ENCODE measurements at regions of chr1 and their contacts with region 1.

Region 1: DNA sequence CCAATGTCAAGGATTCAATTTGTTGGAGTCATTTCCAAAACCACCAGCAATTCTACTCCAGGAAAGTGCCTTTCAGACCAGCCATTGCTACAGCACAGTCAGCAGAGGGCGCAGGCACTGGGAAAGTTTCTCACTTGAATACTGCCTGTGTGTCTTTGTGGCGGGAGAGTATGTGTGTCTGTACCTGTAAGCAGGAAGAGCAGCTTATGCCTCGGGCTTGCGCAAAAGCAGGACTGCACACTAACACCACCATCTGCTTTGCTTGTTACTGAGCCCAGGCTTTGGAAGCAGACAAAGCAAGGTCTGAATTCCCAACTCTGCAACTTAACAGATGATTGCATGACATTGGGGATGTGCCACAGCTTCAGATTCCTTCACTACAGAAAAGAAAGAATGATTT is 7.0 kb upstream of the CTSE start:
- DNase-seq: peak in 1 of 2 experiments; percentile 70
- H3K4me3 ChIP-seq: no peak overlapping the region
- H3K27ac ChIP-seq: no peak overlapping the region
- H3K4me1 ChIP-seq: peaks cover 0 to 3% (median 0%) of the 10 kb centered on the region in 4 experiments; a peak in 2 of 7 replicates
- H3K27me3 ChIP-seq: no peaks in the 10 kb centered on the region
- CTCF ChIP-seq: peak; percentile 76 to 99 (median 94)
- EP300 ChIP-seq: no peak
- POLR2A ChIP-seq: no peak
- RAD21 ChIP-seq: peak; percentile 75 to 84

Region 2: GRCh38 chr1:205878026-205878425 is 152.7 kb before region 1 on chr1:
- CTCF ChIA-PET with region 1: no interaction called
- POLR2A ChIA-PET with region 1: no interaction called
- DNase-seq: no peak
- H3K4me3 ChIP-seq: no peak overlapping the region
- H3K27ac ChIP-seq: no peak overlapping the region
- H3K4me1 ChIP-seq: no peaks in the 10 kb centered on the region
- H3K27me3 ChIP-seq: no peaks in the 10 kb centered on the region
- CTCF ChIP-seq: no peak
- EP300 ChIP-seq: no peak
- POLR2A ChIP-seq: no peak
- RAD21 ChIP-seq: no peak

Region 3: DNA sequence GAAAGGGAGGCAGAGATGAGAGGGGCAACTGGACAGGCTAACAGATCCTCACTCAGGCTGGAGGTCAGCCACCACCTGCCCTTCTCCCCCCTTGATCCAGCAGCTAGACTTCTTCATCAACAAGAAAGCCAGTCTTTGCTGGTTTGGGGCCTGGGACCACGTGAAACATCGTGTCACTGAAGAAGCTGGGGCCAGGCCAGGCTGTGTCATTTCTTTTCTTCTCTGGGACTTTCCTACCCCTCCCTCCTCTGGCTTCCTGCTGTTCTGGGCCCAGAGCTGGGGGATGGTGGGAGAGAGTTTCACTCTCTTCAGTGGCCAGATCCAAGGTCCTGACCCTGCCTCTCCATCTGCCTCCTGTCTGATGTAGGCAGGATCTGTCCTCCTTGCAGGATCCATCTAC is 69.3 kb before region 1 on chr1:
- CTCF ChIA-PET with region 1: no interaction called
- POLR2A ChIA-PET with region 1: no interaction called
- DNase-seq: no peak
- H3K4me3 ChIP-seq: no peak overlapping the region
- H3K27ac ChIP-seq: no peak overlapping the region
- H3K4me1 ChIP-seq: peaks cover 0 to 9% (median 4%) of the 10 kb centered on the region in 4 experiments; a peak in 4 of 7 replicates
- H3K27me3 ChIP-seq: no peaks in the 10 kb centered on the region
- CTCF ChIP-seq: no peak
- EP300 ChIP-seq: no peak
- POLR2A ChIP-seq: no peak
- RAD21 ChIP-seq: no peak

Region 4: DNA sequence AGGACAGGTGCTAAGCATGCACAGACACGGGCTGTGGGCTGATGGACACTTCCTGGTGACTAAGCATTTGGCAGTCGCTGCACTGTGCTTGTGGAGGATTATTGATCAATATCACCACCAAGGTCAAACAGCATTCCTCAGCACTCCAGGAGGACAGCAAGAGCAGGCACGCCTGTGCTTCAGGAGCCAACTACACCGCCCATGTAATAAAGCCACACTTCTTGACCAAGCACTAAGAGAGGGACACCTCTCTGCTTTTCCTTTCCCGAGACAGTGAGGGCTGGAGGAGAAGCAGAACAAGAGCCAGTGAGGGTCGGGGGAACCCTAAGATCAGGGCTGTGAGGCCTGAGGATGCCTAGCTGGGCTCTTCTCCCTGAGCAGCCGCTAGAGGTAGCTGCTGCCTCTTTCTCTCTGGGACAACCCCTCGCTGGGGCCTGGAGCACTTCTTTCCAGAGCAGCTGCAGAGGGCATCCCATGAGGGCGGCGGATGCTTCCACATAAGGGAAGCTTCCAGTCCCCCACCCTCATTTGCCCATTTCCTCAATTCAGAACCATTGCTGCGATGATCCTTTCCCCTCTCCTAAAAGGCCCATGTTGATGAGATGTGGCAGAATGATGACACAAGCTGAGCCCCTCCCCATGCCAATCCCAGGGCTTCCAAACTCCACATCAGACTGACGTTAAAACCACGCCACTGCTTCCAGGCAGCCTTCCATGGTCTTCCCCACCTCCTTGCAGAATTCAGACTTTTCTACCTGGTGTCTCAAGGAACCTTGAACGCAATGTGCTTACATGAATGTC is 46.6 kb before region 1 on chr1:
- CTCF ChIA-PET with region 1: interaction called, 25 read pairs
- POLR2A ChIA-PET with region 1: no interaction called
- DNase-seq: peak in 1 of 2 experiments; percentile 72
- H3K4me3 ChIP-seq: no peak overlapping the region
- H3K27ac ChIP-seq: no peak overlapping the region
- H3K4me1 ChIP-seq: no peaks in the 10 kb centered on the region; a peak in 2 of 7 replicates
- H3K27me3 ChIP-seq: no peaks in the 10 kb centered on the region
- CTCF ChIP-seq: peak; percentile 80 to 94 (median 92)
- EP300 ChIP-seq: no peak
- POLR2A ChIP-seq: no peak
- RAD21 ChIP-seq: peak; percentile 85 to 93

Region 5: GRCh38 chr1:205998457-205999241 is 32.1 kb before region 1 on chr1:
- CTCF ChIA-PET with region 1: interaction called, 23 read pairs
- POLR2A ChIA-PET with region 1: no interaction called
- DNase-seq: no peak
- H3K4me3 ChIP-seq: no peak overlapping the region
- H3K27ac ChIP-seq: no peak overlapping the region
- H3K4me1 ChIP-seq: peaks cover 0 to 7% (median 3%) of the 10 kb centered on the region in 4 experiments; a peak in 3 of 7 replicates
- H3K27me3 ChIP-seq: peaks cover 6 to 22% (median 17%) of the 10 kb centered on the region in 4 experiments
- CTCF ChIP-seq: no peak
- EP300 ChIP-seq: no peak
- POLR2A ChIP-seq: no peak
- RAD21 ChIP-seq: no peak

Region 6: DNA sequence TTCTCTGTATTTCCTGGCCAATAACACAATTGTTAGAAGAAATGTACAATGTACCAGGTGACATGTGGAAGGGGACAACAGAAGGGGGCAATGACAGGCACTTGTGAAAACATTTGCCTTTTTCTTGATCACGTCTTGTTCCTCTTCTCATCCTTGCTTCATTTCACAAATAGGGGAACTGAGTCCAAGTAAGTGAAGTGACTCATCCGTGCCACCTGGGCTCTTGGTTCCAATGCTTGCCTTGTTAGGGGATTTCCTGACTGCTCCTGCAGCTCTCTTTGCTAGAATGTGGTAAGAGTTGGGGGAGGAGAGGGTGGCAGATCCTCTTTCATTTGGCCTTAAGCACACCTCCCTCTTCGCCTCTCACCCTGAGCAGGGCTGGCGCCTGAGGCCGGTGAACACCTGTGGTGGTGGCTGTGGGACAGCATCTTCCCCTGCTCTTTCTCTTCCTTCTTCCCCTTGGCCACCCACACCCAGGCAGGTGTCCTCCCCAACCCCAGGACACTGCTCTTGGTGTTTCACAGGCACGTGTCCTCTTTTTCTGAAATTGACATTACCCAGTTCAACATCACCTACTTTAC is 20.0 kb after region 1 on chr1:
- CTCF ChIA-PET with region 1: interaction called, 16 read pairs
- POLR2A ChIA-PET with region 1: no interaction called
- DNase-seq: no peak
- H3K4me3 ChIP-seq: no peak overlapping the region
- H3K27ac ChIP-seq: no peak overlapping the region
- H3K4me1 ChIP-seq: no peaks in the 10 kb centered on the region; a peak in 1 of 7 replicates
- H3K27me3 ChIP-seq: no peaks in the 10 kb centered on the region
- CTCF ChIP-seq: no peak
- EP300 ChIP-seq: no peak
- POLR2A ChIP-seq: no peak
- RAD21 ChIP-seq: no peak

Region 7: GRCh38 chr1:206106328-206107167 is 75.8 kb after region 1 on chr1:
- CTCF ChIA-PET with region 1: interaction called, 166 read pairs
- POLR2A ChIA-PET with region 1: interaction called, 3 read pairs
- DNase-seq: peak; percentile 47 to 91
- H3K4me3 ChIP-seq: no peak overlapping the region
- H3K27ac ChIP-seq: no peak overlapping the region
- H3K4me1 ChIP-seq: no peaks in the 10 kb centered on the region
- H3K27me3 ChIP-seq: no peaks in the 10 kb centered on the region
- CTCF ChIP-seq: peak; percentile 92 to 95 (median 93)
- EP300 ChIP-seq: no peak
- POLR2A ChIP-seq: no peak
- RAD21 ChIP-seq: peak; percentile 93 to 96

Region 8: DNA sequence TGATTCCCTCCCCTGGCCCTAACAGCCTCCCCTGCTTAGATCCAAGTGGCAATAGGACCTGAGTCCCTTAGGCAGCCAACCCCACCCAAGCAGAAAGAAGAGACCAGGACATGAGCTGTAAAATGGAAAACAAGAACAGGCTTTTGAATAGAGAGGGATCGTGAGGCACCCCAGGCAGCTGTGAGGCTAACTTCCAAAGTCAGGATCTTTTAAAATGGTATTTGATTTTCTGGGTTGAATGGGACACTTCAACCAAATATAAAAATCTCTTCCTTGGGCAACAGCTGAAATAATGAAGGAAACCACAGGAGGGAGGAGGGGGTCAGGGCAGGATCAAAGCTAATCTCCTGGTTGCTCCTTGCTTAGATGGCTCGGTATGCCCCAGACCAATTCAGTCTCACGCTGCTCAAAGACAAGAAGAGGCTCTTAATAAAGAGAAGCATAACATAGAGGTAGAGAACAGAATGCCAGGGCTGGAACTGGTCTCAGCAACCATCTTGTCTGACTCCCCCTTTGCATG is 115.1 kb after region 1 on chr1:
- CTCF ChIA-PET with region 1: no interaction called
- POLR2A ChIA-PET with region 1: no interaction called
- DNase-seq: no peak
- H3K4me3 ChIP-seq: no peak overlapping the region
- H3K27ac ChIP-seq: no peak overlapping the region
- H3K4me1 ChIP-seq: no peaks in the 10 kb centered on the region
- H3K27me3 ChIP-seq: no peaks in the 10 kb centered on the region
- CTCF ChIP-seq: no peak
- EP300 ChIP-seq: no peak
- POLR2A ChIP-seq: no peak
- RAD21 ChIP-seq: no peak

Region 9: DNA sequence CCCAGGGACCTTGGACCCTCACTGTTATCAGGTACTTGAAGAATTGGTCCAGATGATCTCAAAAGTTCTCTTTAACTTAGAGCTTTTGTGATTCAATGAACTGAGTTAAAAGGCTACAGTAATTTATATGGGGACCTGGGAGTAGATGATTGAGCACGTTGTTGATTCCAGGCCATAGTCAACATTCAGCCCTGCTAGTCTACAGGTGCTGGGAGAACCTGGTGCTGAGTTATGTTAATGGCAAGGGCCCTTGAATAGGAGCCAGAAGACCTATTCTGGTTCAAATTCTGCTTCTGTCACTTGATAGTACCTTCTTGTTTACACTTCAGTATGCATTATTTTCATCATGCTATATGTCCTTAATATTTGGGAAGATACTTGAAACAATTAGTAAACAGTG is 615.8 kb after region 1 on chr1:
- CTCF ChIA-PET with region 1: no interaction called
- POLR2A ChIA-PET with region 1: no interaction called
- DNase-seq: no peak
- H3K4me3 ChIP-seq: no peak overlapping the region
- H3K27ac ChIP-seq: no peak overlapping the region
- H3K4me1 ChIP-seq: peaks cover 0 to 3% (median 1%) of the 10 kb centered on the region in 4 experiments; a peak in 2 of 7 replicates
- H3K27me3 ChIP-seq: no peaks in the 10 kb centered on the region
- CTCF ChIP-seq: no peak
- EP300 ChIP-seq: no peak
- POLR2A ChIP-seq: no peak
- RAD21 ChIP-seq: no peak

Measured in H1 (cell line).